CD8-positive, alpha-beta memory T cell (primary cell): ENCODE measurements at regions of chr17 and their contacts with region 1.

Region 1: DNA sequence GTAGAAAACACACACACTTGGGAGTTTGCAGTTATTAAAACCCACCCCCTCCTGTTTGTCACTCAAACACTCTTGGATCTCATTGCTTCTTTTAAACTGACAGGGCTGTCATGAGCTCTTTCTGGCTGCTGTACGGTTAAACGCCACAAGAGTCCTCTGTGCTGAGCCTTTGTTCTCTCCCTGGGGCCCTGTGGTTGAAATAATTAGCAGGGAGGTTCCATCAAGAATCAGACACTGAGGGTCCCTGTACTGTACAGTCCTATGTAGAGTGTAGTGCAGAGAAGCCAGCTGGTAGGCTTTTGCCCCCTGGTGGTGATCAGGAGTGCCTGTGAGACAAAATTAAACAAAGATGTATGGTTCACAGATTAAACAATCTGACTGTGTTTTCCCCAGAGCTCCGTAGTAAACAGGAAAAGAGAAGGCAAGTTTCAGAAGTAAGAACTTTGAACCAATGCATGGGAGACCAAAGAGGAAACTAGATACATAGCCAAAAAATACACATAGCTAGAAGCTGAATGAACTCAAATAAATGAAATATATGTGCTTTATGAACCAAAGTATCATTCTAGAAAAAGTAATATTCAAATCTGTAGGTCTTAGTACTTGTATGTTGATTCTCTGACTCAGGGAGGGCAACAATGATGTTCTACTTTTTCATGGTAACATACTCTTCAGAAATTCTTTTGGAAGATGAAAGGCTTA is 1.4 kb upstream of the SSH2 start:
- DNase-seq: peak; percentile 50 to 84 (median 77)
- H3K4me3 ChIP-seq: peak overlapping the region; percentile 73
- H3K4me3 Mint-ChIP-seq: no peak overlapping the region
- H3K27ac ChIP-seq: no peak overlapping the region
- H3K27ac Mint-ChIP-seq: no peak overlapping the region
- H3K4me1 ChIP-seq: peaks cover 39% of the 10 kb centered on the region
- H3K4me1 Mint-ChIP-seq: peaks cover 29 to 33% (median 30%) of the 10 kb centered on the region in 3 donors
- H3K27me3 ChIP-seq: no peaks in the 10 kb centered on the region
- H3K27me3 Mint-ChIP-seq: peaks cover 0 to 1% of the 10 kb centered on the region in 2 donors

Region 2: GRCh38 chr17:29640413-29640812 is 291.0 kb before region 1 on chr17:
- CTCF ChIA-PET with region 1: interaction called, 10 read pairs
- POLR2A ChIA-PET with region 1: no interaction called
- DNase-seq: no peak
- H3K4me3 ChIP-seq: no peak overlapping the region
- H3K4me3 Mint-ChIP-seq: peak overlapping the region in 1 of 7 donors; percentile 27
- H3K27ac ChIP-seq: no peak overlapping the region
- H3K27ac Mint-ChIP-seq: peak overlapping the region in 7 of 8 donors; percentile 3 to 76 (median 45)
- H3K4me1 ChIP-seq: no peaks in the 10 kb centered on the region
- H3K4me1 Mint-ChIP-seq: peaks cover 11 to 19% (median 12%) of the 10 kb centered on the region in 3 donors
- H3K27me3 ChIP-seq: no peaks in the 10 kb centered on the region
- H3K27me3 Mint-ChIP-seq: no peaks in the 10 kb centered on the region

Region 3: GRCh38 chr17:29699283-29699682 is 232.1 kb before region 1 on chr17:
- CTCF ChIA-PET with region 1: no interaction called
- POLR2A ChIA-PET with region 1: no interaction called
- DNase-seq: no peak
- H3K4me3 ChIP-seq: no peak overlapping the region
- H3K4me3 Mint-ChIP-seq: no peak overlapping the region
- H3K27ac ChIP-seq: no peak overlapping the region
- H3K27ac Mint-ChIP-seq: peak overlapping the region in 7 of 8 donors; percentile 11 to 83 (median 66)
- H3K4me1 ChIP-seq: peaks cover 15% of the 10 kb centered on the region
- H3K4me1 Mint-ChIP-seq: peaks cover 30 to 53% (median 48%) of the 10 kb centered on the region in 3 donors
- H3K27me3 ChIP-seq: no peaks in the 10 kb centered on the region
- H3K27me3 Mint-ChIP-seq: no peaks in the 10 kb centered on the region

Region 4: DNA sequence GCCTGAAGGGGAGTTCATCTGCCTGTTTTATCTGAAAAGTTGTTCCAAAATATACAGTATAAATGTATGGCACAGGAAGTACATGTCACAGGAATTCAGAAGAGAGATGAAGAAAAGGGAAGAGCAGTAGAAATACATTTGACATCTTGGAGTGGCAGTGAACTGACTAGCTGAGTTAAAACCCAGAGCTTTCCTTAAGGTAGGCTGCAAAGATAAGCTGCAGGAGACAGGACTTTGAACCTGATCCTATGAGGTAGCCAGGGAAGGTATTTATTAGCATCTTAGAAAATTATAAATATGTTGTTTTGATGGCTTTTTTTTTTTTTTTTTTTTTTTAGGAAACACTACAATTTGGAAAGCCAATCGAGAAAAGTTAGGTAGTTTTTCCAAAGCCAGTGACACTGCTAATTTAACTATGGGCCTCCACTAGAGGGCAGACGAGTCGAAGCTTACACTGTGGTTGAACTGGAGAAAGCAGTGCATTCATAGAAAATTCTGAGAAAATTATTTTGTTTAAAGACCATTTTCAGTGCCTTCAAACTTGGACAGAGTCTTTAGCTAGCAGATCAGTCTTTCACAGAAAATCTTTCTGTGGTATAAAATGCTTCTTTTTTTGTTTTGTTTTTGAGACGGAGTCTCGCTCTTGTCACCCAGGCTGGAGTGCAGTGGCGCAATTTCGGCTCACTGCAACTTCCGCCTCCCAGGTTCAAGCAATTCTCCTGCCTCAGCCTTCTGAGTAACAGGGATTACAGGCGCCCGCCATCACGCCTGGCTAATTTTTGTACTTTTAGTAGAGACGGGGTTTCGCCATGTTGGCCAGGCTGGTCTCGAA is 123.6 kb before region 1 on chr17:
- CTCF ChIA-PET with region 1: interaction called, 254 read pairs
- POLR2A ChIA-PET with region 1: interaction called, 17 read pairs
- DNase-seq: peak; percentile 52 to 73 (median 55)
- H3K4me3 ChIP-seq: no peak overlapping the region
- H3K4me3 Mint-ChIP-seq: no peak overlapping the region
- H3K27ac ChIP-seq: no peak overlapping the region
- H3K27ac Mint-ChIP-seq: peak overlapping the region in 1 of 8 donors; percentile 85
- H3K4me1 ChIP-seq: peaks cover 8% of the 10 kb centered on the region
- H3K4me1 Mint-ChIP-seq: peaks cover 8 to 23% (median 16%) of the 10 kb centered on the region in 3 donors
- H3K27me3 ChIP-seq: no peaks in the 10 kb centered on the region
- H3K27me3 Mint-ChIP-seq: peaks cover 0 to 1% of the 10 kb centered on the region in 2 donors

Region 5: DNA sequence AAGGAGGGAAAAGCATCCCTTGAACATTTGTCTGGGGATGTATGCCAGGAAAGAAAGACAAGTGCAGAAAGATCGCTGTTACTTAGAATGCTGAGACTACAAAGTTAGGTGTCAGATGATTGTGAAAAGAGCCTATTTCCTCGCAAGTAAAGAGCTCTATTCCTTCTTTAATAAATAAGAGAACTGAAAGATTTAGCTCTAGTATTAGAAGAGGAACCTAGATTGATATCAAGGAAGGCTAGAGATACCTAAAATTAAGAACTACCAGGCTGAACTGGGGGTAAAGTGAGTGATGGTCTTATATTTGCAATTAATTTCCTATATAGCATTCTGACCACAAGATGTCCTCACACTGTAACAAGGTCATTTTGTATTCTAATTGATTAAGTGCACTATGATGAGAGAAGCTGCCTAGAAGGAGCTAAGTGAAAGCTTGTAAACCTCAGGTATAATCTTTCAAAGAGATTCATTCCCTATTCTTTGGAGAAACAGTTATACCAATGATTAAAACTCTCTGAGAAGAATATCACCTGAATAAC is 63.7 kb before region 1 on chr17:
- CTCF ChIA-PET with region 1: interaction called, 14 read pairs
- POLR2A ChIA-PET with region 1: no interaction called
- DNase-seq: no peak
- H3K4me3 ChIP-seq: no peak overlapping the region
- H3K4me3 Mint-ChIP-seq: no peak overlapping the region
- H3K27ac ChIP-seq: no peak overlapping the region
- H3K27ac Mint-ChIP-seq: peak overlapping the region in 1 of 8 donors; percentile 11
- H3K4me1 ChIP-seq: peaks cover 4% of the 10 kb centered on the region
- H3K4me1 Mint-ChIP-seq: peaks cover 20 to 43% (median 26%) of the 10 kb centered on the region in 3 donors
- H3K27me3 ChIP-seq: no peaks in the 10 kb centered on the region
- H3K27me3 Mint-ChIP-seq: no peaks in the 10 kb centered on the region

Region 6: GRCh38 chr17:29909236-29910003 is 22.0 kb before region 1 on chr17:
- CTCF ChIA-PET with region 1: interaction called, 10 read pairs
- POLR2A ChIA-PET with region 1: no interaction called
- DNase-seq: no peak
- H3K4me3 ChIP-seq: no peak overlapping the region
- H3K4me3 Mint-ChIP-seq: no peak overlapping the region
- H3K27ac ChIP-seq: no peak overlapping the region
- H3K27ac Mint-ChIP-seq: peak overlapping the region in 2 of 8 donors; percentile 36 to 38
- H3K4me1 ChIP-seq: peaks cover 7% of the 10 kb centered on the region
- H3K4me1 Mint-ChIP-seq: peaks cover 20 to 53% (median 34%) of the 10 kb centered on the region in 3 donors
- H3K27me3 ChIP-seq: no peaks in the 10 kb centered on the region
- H3K27me3 Mint-ChIP-seq: no peaks in the 10 kb centered on the region

Region 7: DNA sequence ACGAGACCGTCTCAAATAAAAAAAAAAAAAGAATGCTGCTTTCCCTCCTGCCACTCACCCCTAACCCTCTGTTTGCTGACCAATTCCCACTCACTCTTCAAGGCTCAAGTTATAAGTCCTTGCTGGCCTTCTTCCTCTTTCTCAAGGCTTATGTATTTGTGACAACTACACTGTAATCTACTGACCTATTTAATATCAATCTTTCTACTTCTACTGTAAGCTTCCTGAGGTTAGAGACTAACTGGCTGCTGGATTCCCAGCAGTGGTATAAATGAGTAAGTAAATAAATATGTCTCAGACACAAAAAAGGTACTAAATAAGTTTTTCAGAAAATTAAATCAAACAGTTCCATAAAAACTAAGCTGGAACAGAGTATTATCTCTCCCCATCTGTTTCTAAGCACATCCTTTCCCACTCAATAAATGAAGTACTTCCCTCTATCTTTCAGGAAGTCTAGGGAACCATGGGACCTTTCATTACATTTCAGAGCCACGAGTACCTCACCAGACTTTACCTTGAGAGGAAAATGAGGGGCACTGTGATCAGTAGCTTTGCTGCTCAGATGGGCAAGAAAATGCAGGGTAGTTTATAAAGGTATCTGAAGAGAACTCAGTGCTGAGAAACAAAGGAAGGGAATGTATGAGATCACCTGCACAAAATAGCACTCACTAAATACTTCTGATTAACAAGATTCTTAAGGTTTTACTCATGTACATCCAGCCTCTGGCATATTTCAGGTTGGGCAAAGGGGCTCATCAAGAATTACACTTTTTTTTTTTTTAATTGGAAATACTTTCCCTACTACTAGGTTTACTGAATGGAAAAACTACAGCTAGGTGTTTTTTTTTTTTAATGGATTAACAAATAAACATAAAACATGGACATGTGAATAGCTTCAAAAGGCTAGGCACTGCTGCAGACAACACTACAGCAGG is 12.2 kb before region 1 on chr17:
- CTCF ChIA-PET with region 1: interaction called, 23 read pairs
- POLR2A ChIA-PET with region 1: no interaction called
- DNase-seq: no peak
- H3K4me3 ChIP-seq: no peak overlapping the region
- H3K4me3 Mint-ChIP-seq: no peak overlapping the region
- H3K27ac ChIP-seq: no peak overlapping the region
- H3K27ac Mint-ChIP-seq: peak overlapping the region in 2 of 8 donors; percentile 14 to 61
- H3K4me1 ChIP-seq: no peaks in the 10 kb centered on the region
- H3K4me1 Mint-ChIP-seq: peaks cover 21 to 40% (median 38%) of the 10 kb centered on the region in 3 donors
- H3K27me3 ChIP-seq: no peaks in the 10 kb centered on the region
- H3K27me3 Mint-ChIP-seq: no peaks in the 10 kb centered on the region